ENCODE measurements at regions of chr10 and their contacts with region 1.

Region 1: DNA sequence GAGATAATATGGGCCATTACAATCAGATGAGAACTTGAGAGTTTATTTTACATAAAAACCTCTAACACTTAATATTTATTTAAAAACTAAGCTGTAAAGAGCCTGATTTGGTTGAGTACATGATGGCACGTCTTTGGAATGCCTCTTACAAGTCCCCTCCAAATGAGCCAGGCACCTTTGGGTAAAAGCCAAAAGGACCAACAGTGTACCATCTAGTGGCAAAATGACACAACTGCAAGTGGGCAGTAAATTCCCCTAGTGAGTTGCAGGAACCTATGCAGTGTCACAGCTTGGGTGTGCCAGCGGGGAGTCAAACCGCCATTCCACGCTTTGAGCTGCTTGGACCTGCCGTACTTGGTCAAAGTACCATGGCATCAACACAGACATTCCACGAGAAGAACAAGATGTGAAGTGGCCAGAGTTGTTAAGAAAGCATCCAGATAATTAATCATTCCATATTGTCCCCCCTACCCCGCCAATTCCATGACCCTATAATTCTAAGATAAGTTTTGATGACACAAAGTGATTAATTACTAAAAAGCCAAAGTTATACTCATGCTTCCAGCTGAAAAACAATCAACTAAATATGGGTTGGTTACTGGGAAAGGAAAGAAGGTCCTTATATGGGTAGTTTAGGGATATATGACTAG is 115.2 kb downstream of the SORBS1 start:
- DNase-seq: peak; percentile 59
- H3K4me3 ChIP-seq: no peak overlapping the region
- H3K27ac ChIP-seq: peak overlapping the region; percentile 77 to 89 (median 88)
- H3K4me1 ChIP-seq: peaks cover 16 to 43% (median 33%) of the 10 kb centered on the region in 4 donors
- H3K27me3 ChIP-seq: no peaks in the 10 kb centered on the region
- CTCF ChIP-seq: peak; percentile 76 to 92 (median 86)
- EP300 ChIP-seq: peak; percentile 72
- POLR2A ChIP-seq: no peak

Region 2: DNA sequence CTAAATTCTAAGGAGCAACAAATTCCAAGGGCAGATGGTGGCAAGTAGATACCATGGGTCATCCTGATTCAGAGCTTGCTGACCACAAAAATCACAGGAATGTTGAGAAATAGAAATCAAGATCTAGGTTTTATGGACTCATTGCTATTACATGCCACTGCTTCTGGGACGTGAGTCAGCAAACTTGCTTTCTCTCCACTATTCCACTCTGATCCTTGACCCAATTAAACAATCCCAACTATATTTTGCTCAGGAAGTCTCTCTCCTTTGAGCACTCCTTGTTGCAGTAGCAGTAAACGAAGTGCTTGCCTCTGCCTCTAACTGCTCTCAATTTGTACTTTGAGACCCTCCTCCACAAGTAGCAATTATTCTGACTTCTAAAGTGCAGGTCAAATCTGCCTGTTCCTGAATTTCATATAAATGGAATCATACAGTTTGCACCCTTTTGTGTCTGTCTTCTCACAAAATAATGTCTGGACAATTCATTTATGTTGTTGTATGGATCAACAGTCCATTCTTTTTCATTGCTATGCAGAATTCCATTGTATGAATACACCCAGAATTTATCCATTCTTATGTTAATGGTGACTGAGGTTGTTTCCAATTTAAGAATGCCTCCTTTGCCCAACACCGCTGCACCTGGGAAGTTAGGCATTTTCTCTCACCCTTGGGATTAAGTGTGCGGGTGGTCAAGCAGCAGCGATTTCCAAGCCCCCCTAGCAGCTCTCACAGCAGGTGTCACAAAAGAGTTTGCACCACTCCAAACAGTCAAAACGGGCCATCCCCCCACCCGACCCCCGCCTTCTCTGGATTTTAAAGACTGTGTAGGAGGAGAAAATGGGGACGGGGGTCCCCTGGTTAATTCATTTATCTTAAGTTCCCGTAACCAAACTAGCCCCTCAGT is 216.0 kb before region 1 on chr10:
- in situ Hi-C with region 1: no loop called
- intact Hi-C with region 1: no loop called
- DNase-seq: no peak
- H3K4me3 ChIP-seq: peak overlapping the region in 3 of 4 donors; percentile 16 to 40 (median 30)
- H3K27ac ChIP-seq: no peak overlapping the region
- H3K4me1 ChIP-seq: peaks cover 0 to 8% (median 0%) of the 10 kb centered on the region in 4 donors
- H3K27me3 ChIP-seq: no peaks in the 10 kb centered on the region
- CTCF ChIP-seq: no peak
- EP300 ChIP-seq: no peak
- POLR2A ChIP-seq: no peak

Region 3: GRCh38 chr10:95475827-95476468 is 30.0 kb after region 1 on chr10:
- in situ Hi-C with region 1: no loop called
- intact Hi-C with region 1: loop called (anchors 1 kb)
- DNase-seq: peak; percentile 87
- H3K4me3 ChIP-seq: no peak overlapping the region
- H3K27ac ChIP-seq: peak overlapping the region; percentile 78 to 89 (median 88)
- H3K4me1 ChIP-seq: peaks cover 12 to 92% (median 76%) of the 10 kb centered on the region in 4 donors
- H3K27me3 ChIP-seq: no peaks in the 10 kb centered on the region
- CTCF ChIP-seq: no peak
- EP300 ChIP-seq: peak; percentile 4
- POLR2A ChIP-seq: no peak

Region 4: GRCh38 chr10:95561182-95562075 is 115.5 kb after region 1 on chr10 and contains the start of gene SORBS1:
- in situ Hi-C with region 1: no loop called
- intact Hi-C with region 1: loop called (anchors 10 kb)
- DNase-seq: peak; percentile 97
- H3K4me3 ChIP-seq: peak within 1 kb of the TSS; percentile 61 to 89 (median 72)
- H3K27ac ChIP-seq: peak within 1 kb of the TSS; percentile 90 to 95 (median 92)
- H3K4me1 ChIP-seq: peaks cover 0 to 38% (median 28%) of the 10 kb centered on the region in 4 donors
- H3K27me3 ChIP-seq: no peaks in the 10 kb centered on the region
- CTCF ChIP-seq: no peak
- EP300 ChIP-seq: no peak
- POLR2A ChIP-seq: peak; percentile 83
- total RNA-seq, gene SORBS1: 92.2 to 308 (median 150) TPM

Region 5: DNA sequence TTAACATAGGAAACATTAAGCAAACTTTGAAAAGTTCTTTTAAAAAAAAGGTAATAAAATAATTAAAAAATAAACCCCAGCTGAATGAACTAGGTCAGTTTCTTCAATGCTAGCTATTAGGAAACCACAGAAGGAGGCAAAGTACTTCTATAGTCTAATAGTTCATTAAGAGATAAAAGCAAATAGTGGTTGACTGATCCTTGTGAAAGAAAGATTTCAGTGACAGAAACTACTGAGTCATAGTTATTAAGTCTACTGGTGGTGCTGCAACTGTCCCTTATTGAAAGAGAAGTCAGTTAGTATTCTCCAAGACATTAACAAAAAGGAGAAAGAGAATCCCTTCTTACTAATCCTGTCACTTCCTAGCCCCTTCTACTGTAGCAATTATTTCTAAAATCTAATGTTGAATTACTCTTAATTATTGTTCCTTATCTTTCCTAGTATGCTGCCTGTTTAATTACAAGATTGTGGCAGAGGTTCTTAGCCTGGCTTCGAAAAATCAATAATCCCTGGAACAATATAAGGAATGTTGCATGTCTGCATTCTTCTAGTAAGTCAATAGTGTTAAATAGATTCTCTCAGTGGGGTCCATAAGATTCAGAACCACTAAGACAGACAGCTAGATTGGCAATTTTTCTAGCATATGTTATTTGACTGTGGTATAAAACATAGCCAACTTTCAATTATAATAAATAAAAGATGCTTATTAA is 229.6 kb after region 1 on chr10:
- in situ Hi-C with region 1: no loop called
- intact Hi-C with region 1: no loop called
- DNase-seq: no peak
- H3K4me3 ChIP-seq: no peak overlapping the region
- H3K27ac ChIP-seq: no peak overlapping the region
- H3K4me1 ChIP-seq: no peaks in the 10 kb centered on the region
- H3K27me3 ChIP-seq: no peaks in the 10 kb centered on the region
- CTCF ChIP-seq: no peak
- EP300 ChIP-seq: no peak
- POLR2A ChIP-seq: no peak

Measured in transverse colon (tissue), 4 donors.